GM23248 (cell line): ENCODE measurements at regions of chr18 and their contacts with region 1.

Region 1: GRCh38 chr18:27685807-27686412 is 491.0 kb downstream of the CDH2 start:
- DNase-seq: peak; percentile 74
- H3K4me3 ChIP-seq: no peak overlapping the region
- H3K27ac ChIP-seq: no peak overlapping the region
- H3K4me1 ChIP-seq: no peaks in the 10 kb centered on the region
- H3K27me3 ChIP-seq: peaks cover 34% of the 10 kb centered on the region

Region 2: DNA sequence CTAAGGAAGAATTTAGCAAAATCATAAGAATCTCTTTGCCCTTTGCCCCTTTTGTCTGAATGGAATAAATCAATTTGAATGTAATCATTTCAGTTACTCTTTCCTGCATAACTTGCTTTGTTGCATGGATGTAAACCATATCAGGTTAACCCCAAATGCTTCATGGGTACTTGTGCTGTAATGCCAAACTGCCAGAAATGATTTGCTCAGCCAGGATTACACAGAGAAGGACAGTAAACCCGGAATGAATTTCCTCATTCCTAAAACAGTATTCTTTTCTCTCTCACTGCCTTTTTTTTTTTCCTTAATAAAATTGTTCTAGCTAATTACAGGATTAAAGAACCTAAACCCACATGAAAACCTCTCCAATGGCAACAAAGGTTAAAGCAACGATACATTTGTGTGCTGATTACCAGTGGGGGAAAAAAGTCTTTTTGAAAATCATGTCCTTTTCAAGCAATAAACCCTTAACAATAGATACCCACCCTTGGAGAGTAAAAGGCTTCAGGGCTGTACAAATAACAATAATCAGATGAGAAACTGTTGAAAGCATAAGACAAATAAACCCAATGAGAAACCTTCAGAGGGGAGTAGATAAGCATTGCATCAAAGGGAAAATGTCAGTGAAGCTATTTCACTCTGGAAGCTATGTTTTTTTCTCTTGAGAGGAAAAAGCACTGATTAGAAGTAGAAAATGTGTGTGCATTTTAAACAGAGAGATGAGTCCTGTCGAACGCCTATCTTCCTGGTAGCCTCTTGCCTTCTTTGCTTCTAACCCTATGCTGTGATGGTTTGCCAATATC is 215.7 kb after region 1 on chr18:
- in situ Hi-C with region 1: no loop called
- DNase-seq: no peak
- H3K4me3 ChIP-seq: no peak overlapping the region
- H3K27ac ChIP-seq: no peak overlapping the region
- H3K4me1 ChIP-seq: no peaks in the 10 kb centered on the region
- H3K27me3 ChIP-seq: peaks cover 4% of the 10 kb centered on the region; the same call in 1 of the 2 replicates

Region 3: GRCh38 chr18:28176933-28177827 is 491.3 kb after region 1 on chr18 and contains the start of gene CDH2:
- in situ Hi-C with region 1: loop called (anchors 25 kb)
- DNase-seq: peak; percentile 91
- H3K4me3 ChIP-seq: peak within 1 kb of the TSS; percentile 76
- H3K27ac ChIP-seq: peak within 1 kb of the TSS; percentile 50
- H3K4me1 ChIP-seq: peaks cover 47% of the 10 kb centered on the region
- H3K27me3 ChIP-seq: no peaks in the 10 kb centered on the region
- total RNA-seq, gene CDH2: 157 and 165 TPM in 2 replicates